HCT116 (cell line): ENCODE measurements at regions of chr12 and their contacts with region 1.

Region 1: GRCh38 chr12:50825372-50825838 is 17.3 kb upstream of the TMPRSS12 start:
- DNase-seq: peak; percentile 43
- ATAC-seq: peak; percentile 52
- H3K4me3 ChIP-seq: no peak overlapping the region
- H3K27ac ChIP-seq: no peak overlapping the region
- H3K4me1 ChIP-seq: peaks cover 0 to 4% of the 10 kb centered on the region in 2 experiments; a peak in 1 of 4 replicates
- H3K27me3 ChIP-seq: no peaks in the 10 kb centered on the region
- CTCF ChIP-seq: peak; percentile 3 to 63 (median 59); a peak in 4 of 6 replicates
- POLR2A ChIP-seq: no peak
- RAD21 ChIP-seq: peak; percentile 80

Region 2: DNA sequence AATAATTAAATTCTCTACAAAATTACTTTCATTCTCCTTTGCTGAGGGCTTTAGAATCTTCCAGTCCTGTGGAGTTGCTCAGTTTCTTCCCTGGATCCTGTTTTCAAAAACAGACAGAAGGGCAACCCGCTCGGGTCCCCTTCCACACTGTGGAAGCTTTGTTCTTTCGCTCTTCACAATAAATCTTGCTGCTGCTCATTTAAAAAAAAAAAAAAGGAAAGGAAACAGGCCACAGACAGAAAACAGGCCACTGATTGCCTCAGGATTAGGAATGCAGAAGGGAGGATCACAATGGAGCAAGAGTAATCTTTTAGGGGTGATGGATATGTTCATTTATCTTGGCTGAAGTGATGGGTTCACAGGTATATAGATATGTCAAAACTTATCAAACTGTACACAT is 97.4 kb after region 1 on chr12:
- CTCF ChIA-PET with region 1: no interaction called
- POLR2A ChIA-PET with region 1: no interaction called
- RAD21 ChIA-PET with region 1: no interaction called
- intact Hi-C with region 1: no loop called
- DNase-seq: no peak
- ATAC-seq: no peak
- H3K4me3 ChIP-seq: no peak overlapping the region
- H3K27ac ChIP-seq: no peak overlapping the region
- H3K4me1 ChIP-seq: peaks cover 18 to 21% of the 10 kb centered on the region in 2 experiments; a peak in 3 of 4 replicates
- H3K27me3 ChIP-seq: no peaks in the 10 kb centered on the region
- CTCF ChIP-seq: no peak
- POLR2A ChIP-seq: no peak
- RAD21 ChIP-seq: no peak

Region 3: GRCh38 chr12:50986966-50987737 is 161.7 kb after region 1 on chr12:
- CTCF ChIA-PET with region 1: interaction called, 31 read pairs
- POLR2A ChIA-PET with region 1: no interaction called
- RAD21 ChIA-PET with region 1: interaction called in 1 of 2 experiments, 8 read pairs
- intact Hi-C with region 1: loop called (anchors 1 kb)
- DNase-seq: peak; percentile 15
- ATAC-seq: peak; percentile 69
- H3K4me3 ChIP-seq: no peak overlapping the region
- H3K27ac ChIP-seq: no peak overlapping the region
- H3K4me1 ChIP-seq: peaks cover 0 to 6% of the 10 kb centered on the region in 2 experiments; a peak in 1 of 4 replicates
- H3K27me3 ChIP-seq: no peaks in the 10 kb centered on the region
- CTCF ChIP-seq: peak; percentile 35 to 61 (median 49); a peak in 4 of 6 replicates
- POLR2A ChIP-seq: no peak
- RAD21 ChIP-seq: peak; percentile 74

Region 4: GRCh38 chr12:51025836-51026638 is 200.6 kb after region 1 on chr12 and contains the start of gene SLC11A2:
- CTCF ChIA-PET with region 1: interaction called, 19 read pairs
- POLR2A ChIA-PET with region 1: interaction called, 6 read pairs
- RAD21 ChIA-PET with region 1: interaction called, 4 read pairs
- intact Hi-C with region 1: loop called (anchors 2 kb)
- DNase-seq: peak; percentile 86
- ATAC-seq: peak; percentile 93
- H3K4me3 ChIP-seq: peak within 1 kb of the TSS; percentile 76 to 77
- H3K27ac ChIP-seq: peak within 1 kb of the TSS; percentile 91
- H3K4me1 ChIP-seq: peaks cover 27 to 49% of the 10 kb centered on the region in 2 experiments
- H3K27me3 ChIP-seq: no peaks in the 10 kb centered on the region
- CTCF ChIP-seq: no peak
- POLR2A ChIP-seq: peak; percentile 90
- RAD21 ChIP-seq: no peak
- total RNA-seq, gene SLC11A2: 38.7 TPM